ENCODE measurements at regions of chr6 and their contacts with region 1.

Region 1: DNA sequence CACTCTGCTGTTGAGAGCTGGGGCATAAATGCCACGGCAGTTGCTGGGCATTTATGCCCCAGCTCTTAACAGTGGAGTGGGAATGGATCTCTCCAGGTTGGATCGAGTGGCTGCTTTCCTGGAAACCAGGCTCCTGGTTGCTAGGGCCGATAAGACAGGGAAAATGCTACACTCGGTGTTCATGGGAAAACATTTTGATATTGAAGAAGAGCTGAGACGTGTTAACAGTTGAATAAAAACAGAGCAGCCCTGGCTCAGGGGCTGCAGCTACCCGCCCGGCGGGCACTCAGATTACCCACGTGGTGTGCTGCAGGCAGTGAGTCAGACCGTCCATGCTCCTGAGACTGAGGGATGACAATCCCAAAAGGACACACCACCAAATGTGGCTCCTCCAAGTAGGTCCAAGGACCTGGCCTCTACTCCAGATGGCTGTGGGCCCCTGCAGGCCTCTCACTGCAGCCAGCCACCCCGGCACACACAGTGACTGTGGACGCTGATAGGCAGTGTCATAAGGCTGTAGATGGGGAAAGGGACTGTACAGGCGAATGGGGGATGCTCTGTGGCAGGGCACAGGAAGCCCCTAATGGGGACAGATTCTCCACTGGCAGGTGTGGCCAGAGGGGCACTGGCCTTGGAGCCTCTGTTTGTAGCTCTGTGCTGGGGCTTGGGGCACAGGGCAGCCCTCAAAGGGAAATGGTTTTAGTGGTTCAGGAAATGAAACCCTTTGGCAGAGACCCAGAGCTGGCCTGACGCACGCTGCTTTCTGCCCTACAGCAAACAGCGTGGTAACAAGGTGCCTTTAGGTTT is 237.8 kb downstream of the LY86 start:
- DNase-seq: peak; percentile 88 to 95
- ATAC-seq: peak; percentile 73 to 82
- H3K4me3 ChIP-seq: peak overlapping the region; percentile 32 to 50 (median 39)
- H3K27ac ChIP-seq: peak overlapping the region; percentile 95 to 98 (median 98)
- H3K4me1 ChIP-seq: peaks cover 25 to 31% of the 10 kb centered on the region in 2 donors
- H3K27me3 ChIP-seq: no peaks in the 10 kb centered on the region
- CTCF ChIP-seq: no peak
- POLR2A ChIP-seq: peak; percentile 59 to 70

Region 2: GRCh38 chr6:6724539-6725467 is 101.5 kb before region 1 on chr6:
- in situ Hi-C with region 1: no loop called
- intact Hi-C with region 1: no loop called
- DNase-seq: peak; percentile 48 to 69
- ATAC-seq: peak; percentile 93 to 94
- H3K4me3 ChIP-seq: peak overlapping the region; percentile 51 to 65 (median 60)
- H3K27ac ChIP-seq: peak overlapping the region; percentile 84 to 90 (median 86)
- H3K4me1 ChIP-seq: peaks cover 18 to 19% of the 10 kb centered on the region in 2 donors
- H3K27me3 ChIP-seq: no peaks in the 10 kb centered on the region
- CTCF ChIP-seq: peak; percentile 66 to 81 (median 74)
- POLR2A ChIP-seq: no peak

Region 3: GRCh38 chr6:6749702-6750491 is 76.4 kb before region 1 on chr6:
- in situ Hi-C with region 1: no loop called
- intact Hi-C with region 1: loop called (anchors 2 kb)
- DNase-seq: peak; percentile 88 to 95
- ATAC-seq: peak; percentile 63 to 78
- H3K4me3 ChIP-seq: peak overlapping the region; percentile 38 to 70 (median 56)
- H3K27ac ChIP-seq: peak overlapping the region; percentile 98 to 99 (median 98)
- H3K4me1 ChIP-seq: peaks cover 45 to 47% of the 10 kb centered on the region in 2 donors
- H3K27me3 ChIP-seq: no peaks in the 10 kb centered on the region
- CTCF ChIP-seq: no peak
- POLR2A ChIP-seq: peak; percentile 56 to 88

Region 4: DNA sequence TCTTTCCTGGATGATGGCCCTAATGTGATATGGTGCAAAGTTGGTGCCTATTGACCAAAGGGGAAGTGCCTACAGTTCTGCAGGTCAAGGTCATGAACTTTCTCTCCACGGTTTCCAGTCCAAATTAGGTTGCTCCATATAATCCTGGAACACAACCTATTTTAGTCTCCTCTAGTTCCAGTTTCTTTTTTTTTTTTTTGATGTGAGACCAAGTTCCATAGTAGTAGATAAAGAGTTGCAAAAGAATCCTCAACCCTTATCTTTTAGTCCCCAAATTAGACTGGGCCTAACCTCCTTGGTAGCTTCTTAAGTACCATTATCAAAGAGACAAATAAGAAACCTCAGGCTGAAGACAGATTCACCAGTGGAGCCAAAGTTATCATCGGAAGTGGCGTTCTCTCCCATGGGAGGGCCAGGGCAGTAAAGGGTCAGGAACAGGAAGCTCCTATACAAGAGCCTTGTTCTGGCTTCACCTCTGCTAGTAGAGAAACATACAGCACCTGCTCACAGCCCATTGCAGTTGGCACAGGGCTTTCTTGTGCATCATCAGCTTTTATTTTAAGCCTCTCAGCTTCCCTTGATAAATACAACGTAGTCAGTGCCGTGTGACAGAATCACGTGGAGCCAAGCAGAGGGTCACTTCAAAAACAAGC is 149.3 kb after region 1 on chr6:
- in situ Hi-C with region 1: no loop called
- intact Hi-C with region 1: loop called (anchors 5 kb)
- DNase-seq: peak; percentile 82 to 86
- ATAC-seq: peak; percentile 95 to 96
- H3K4me3 ChIP-seq: no peak overlapping the region
- H3K27ac ChIP-seq: peak overlapping the region; percentile 82 to 93 (median 82)
- H3K4me1 ChIP-seq: peaks cover 18 to 28% of the 10 kb centered on the region in 2 donors
- H3K27me3 ChIP-seq: no peaks in the 10 kb centered on the region
- CTCF ChIP-seq: no peak
- POLR2A ChIP-seq: no peak